Natural killer cell (primary cell): ENCODE measurements at regions of chr2 and their contacts with region 1.

Region 1: GRCh38 chr2:238370823-238371372 is 50.6 kb downstream of the TRAF3IP1 start:
- DNase-seq: peak; percentile 63 to 75
- ATAC-seq: peak; percentile 91 to 99 (median 99)
- H3K4me3 ChIP-seq: no peak overlapping the region
- H3K4me3 Mint-ChIP-seq: no peak overlapping the region
- H3K27ac ChIP-seq: no peak overlapping the region
- H3K27ac Mint-ChIP-seq: peak overlapping the region; percentile 14 to 69
- H3K4me1 ChIP-seq: peaks cover 4% of the 10 kb centered on the region
- H3K4me1 Mint-ChIP-seq: peaks cover 7 to 15% of the 10 kb centered on the region in 2 donors
- H3K27me3 ChIP-seq: no peaks in the 10 kb centered on the region
- H3K27me3 Mint-ChIP-seq: no peaks in the 10 kb centered on the region
- CTCF ChIP-seq: peak; percentile 86

Region 2: GRCh38 chr2:238187618-238188548 is 183.0 kb before region 1 on chr2:
- intact Hi-C with region 1: no loop called
- DNase-seq: no peak
- ATAC-seq: no peak
- H3K4me3 ChIP-seq: no peak overlapping the region
- H3K4me3 Mint-ChIP-seq: no peak overlapping the region
- H3K27ac ChIP-seq: no peak overlapping the region
- H3K27ac Mint-ChIP-seq: peak overlapping the region; percentile 57 to 93
- H3K4me1 ChIP-seq: peaks cover 31% of the 10 kb centered on the region
- H3K4me1 Mint-ChIP-seq: peaks cover 47 to 53% of the 10 kb centered on the region in 2 donors
- H3K27me3 ChIP-seq: no peaks in the 10 kb centered on the region
- H3K27me3 Mint-ChIP-seq: no peaks in the 10 kb centered on the region
- CTCF ChIP-seq: no peak

Region 3: GRCh38 chr2:238404406-238405216 is 33.7 kb after region 1 on chr2:
- intact Hi-C with region 1: loop called (anchors 2 kb)
- DNase-seq: no peak
- ATAC-seq: no peak
- H3K4me3 ChIP-seq: no peak overlapping the region
- H3K4me3 Mint-ChIP-seq: no peak overlapping the region
- H3K27ac ChIP-seq: peak overlapping the region; percentile 89
- H3K27ac Mint-ChIP-seq: peak overlapping the region; percentile 96 to 98
- H3K4me1 ChIP-seq: peaks cover 29% of the 10 kb centered on the region
- H3K4me1 Mint-ChIP-seq: peaks cover 13 to 31% of the 10 kb centered on the region in 2 donors
- H3K27me3 ChIP-seq: no peaks in the 10 kb centered on the region
- H3K27me3 Mint-ChIP-seq: no peaks in the 10 kb centered on the region
- CTCF ChIP-seq: no peak

Region 4: GRCh38 chr2:238426568-238427434 is 55.9 kb after region 1 on chr2 and contains the start of gene ASB1:
- intact Hi-C with region 1: loop called (anchors 2 kb)
- DNase-seq: peak; percentile 83 to 86
- ATAC-seq: peak; percentile 82 to 88 (median 85)
- H3K4me3 ChIP-seq: peak within 1 kb of the TSS; percentile 55
- H3K4me3 Mint-ChIP-seq: peak within 1 kb of the TSS; percentile 89
- H3K27ac ChIP-seq: peak within 1 kb of the TSS; percentile 92
- H3K27ac Mint-ChIP-seq: peak within 1 kb of the TSS; percentile 90 to 91
- H3K4me1 ChIP-seq: peaks cover 28% of the 10 kb centered on the region
- H3K4me1 Mint-ChIP-seq: peaks cover 42 to 55% of the 10 kb centered on the region in 2 donors
- H3K27me3 ChIP-seq: no peaks in the 10 kb centered on the region
- H3K27me3 Mint-ChIP-seq: no peaks in the 10 kb centered on the region
- CTCF ChIP-seq: no peak
- total RNA-seq, gene ASB1: 38.3 to 47.5 (median 38.9) TPM

Region 5: GRCh38 chr2:238462782-238463396 is 92.0 kb after region 1 on chr2:
- intact Hi-C with region 1: loop called (anchors 1 kb)
- DNase-seq: peak in 1 of 2 donors; percentile 72
- ATAC-seq: peak; percentile 73 to 84 (median 74)
- H3K4me3 ChIP-seq: no peak overlapping the region
- H3K4me3 Mint-ChIP-seq: no peak overlapping the region
- H3K27ac ChIP-seq: no peak overlapping the region
- H3K27ac Mint-ChIP-seq: no peak overlapping the region
- H3K4me1 ChIP-seq: no peaks in the 10 kb centered on the region
- H3K4me1 Mint-ChIP-seq: peaks cover 0 to 6% of the 10 kb centered on the region in 2 donors
- H3K27me3 ChIP-seq: no peaks in the 10 kb centered on the region
- H3K27me3 Mint-ChIP-seq: no peaks in the 10 kb centered on the region
- CTCF ChIP-seq: peak; percentile 89

Region 6: GRCh38 chr2:238784671-238785527 is 414.0 kb after region 1 on chr2:
- intact Hi-C with region 1: loop called (anchors 2 kb)
- DNase-seq: peak; percentile 33 to 73
- ATAC-seq: peak; percentile 53 to 72 (median 58)
- H3K4me3 ChIP-seq: no peak overlapping the region
- H3K4me3 Mint-ChIP-seq: no peak overlapping the region
- H3K27ac ChIP-seq: no peak overlapping the region
- H3K27ac Mint-ChIP-seq: no peak overlapping the region
- H3K4me1 ChIP-seq: no peaks in the 10 kb centered on the region
- H3K4me1 Mint-ChIP-seq: no peaks in the 10 kb centered on the region
- H3K27me3 ChIP-seq: no peaks in the 10 kb centered on the region
- H3K27me3 Mint-ChIP-seq: peaks cover 15 to 18% of the 10 kb centered on the region in 2 donors
- CTCF ChIP-seq: peak; percentile 72